ENCODE measurements at regions of chr1 and their contacts with region 1.

Region 1: GRCh38 chr1:153922972-153923925 is at the start of gene GATAD2B:
- DNase-seq: peak; percentile 90
- ATAC-seq: peak; percentile 92
- H3K4me3 Mint-ChIP-seq: peak within 1 kb of the TSS; percentile 95
- H3K27ac Mint-ChIP-seq: peak within 1 kb of the TSS; percentile 95
- H3K4me1 Mint-ChIP-seq: peaks cover 47% of the 10 kb centered on the region
- H3K27me3 Mint-ChIP-seq: no peaks in the 10 kb centered on the region
- CTCF ChIP-seq: no peak
- total RNA-seq, gene GATAD2B: 78.4 and 86.3 TPM in 2 replicates

Region 2: GRCh38 chr1:153670859-153671627 is 252.2 kb before region 1 on chr1 and contains the start of gene ILF2:
- CTCF ChIA-PET with region 1: no interaction called
- POLR2A ChIA-PET with region 1: interaction called, 3 read pairs
- intact Hi-C with region 1: loop called (anchors 5 kb)
- DNase-seq: peak; percentile 85
- ATAC-seq: peak; percentile 83
- H3K4me3 Mint-ChIP-seq: no peak within 1 kb of the TSS
- H3K27ac Mint-ChIP-seq: no peak within 1 kb of the TSS
- H3K4me1 Mint-ChIP-seq: peaks cover 28% of the 10 kb centered on the region
- H3K27me3 Mint-ChIP-seq: no peaks in the 10 kb centered on the region
- CTCF ChIP-seq: no peak
- total RNA-seq, gene ILF2: 182 and 191 TPM in 2 replicates

Region 3: GRCh38 chr1:153816283-153816889 is 106.9 kb before region 1 on chr1:
- CTCF ChIA-PET with region 1: interaction called, 3 read pairs
- POLR2A ChIA-PET with region 1: interaction called, 3 read pairs
- intact Hi-C with region 1: loop called (anchors 1 kb)
- DNase-seq: no peak
- ATAC-seq: no peak
- H3K4me3 Mint-ChIP-seq: no peak overlapping the region
- H3K27ac Mint-ChIP-seq: no peak overlapping the region
- H3K4me1 Mint-ChIP-seq: peaks cover 3% of the 10 kb centered on the region
- H3K27me3 Mint-ChIP-seq: no peaks in the 10 kb centered on the region
- CTCF ChIP-seq: no peak

Region 4: DNA sequence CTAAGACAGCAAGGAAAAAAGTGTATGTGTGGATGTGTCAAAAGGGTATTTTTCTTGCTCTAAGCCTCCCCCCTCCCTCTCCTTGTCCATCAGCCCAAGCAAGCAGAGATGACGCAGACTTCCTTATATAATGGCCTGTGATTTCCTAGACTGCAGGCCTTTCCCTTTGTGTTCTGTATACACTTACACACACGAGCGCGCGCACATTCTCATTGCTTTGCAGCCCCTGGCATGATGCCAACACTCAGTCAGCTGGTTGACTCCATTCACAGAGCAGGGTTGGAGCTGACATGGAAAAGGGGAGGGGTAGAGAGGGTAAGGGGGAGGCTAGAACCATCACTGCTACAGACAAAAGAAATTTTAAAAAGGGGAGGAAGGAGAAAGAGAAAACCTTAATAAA is 42.3 kb before region 1 on chr1:
- CTCF ChIA-PET with region 1: no interaction called
- POLR2A ChIA-PET with region 1: no interaction called
- intact Hi-C with region 1: loop called (anchors 5 kb)
- DNase-seq: no peak
- ATAC-seq: peak; percentile 62
- H3K4me3 Mint-ChIP-seq: no peak overlapping the region
- H3K27ac Mint-ChIP-seq: no peak overlapping the region
- H3K4me1 Mint-ChIP-seq: peaks cover 27% of the 10 kb centered on the region
- H3K27me3 Mint-ChIP-seq: no peaks in the 10 kb centered on the region
- CTCF ChIP-seq: no peak

Region 5: DNA sequence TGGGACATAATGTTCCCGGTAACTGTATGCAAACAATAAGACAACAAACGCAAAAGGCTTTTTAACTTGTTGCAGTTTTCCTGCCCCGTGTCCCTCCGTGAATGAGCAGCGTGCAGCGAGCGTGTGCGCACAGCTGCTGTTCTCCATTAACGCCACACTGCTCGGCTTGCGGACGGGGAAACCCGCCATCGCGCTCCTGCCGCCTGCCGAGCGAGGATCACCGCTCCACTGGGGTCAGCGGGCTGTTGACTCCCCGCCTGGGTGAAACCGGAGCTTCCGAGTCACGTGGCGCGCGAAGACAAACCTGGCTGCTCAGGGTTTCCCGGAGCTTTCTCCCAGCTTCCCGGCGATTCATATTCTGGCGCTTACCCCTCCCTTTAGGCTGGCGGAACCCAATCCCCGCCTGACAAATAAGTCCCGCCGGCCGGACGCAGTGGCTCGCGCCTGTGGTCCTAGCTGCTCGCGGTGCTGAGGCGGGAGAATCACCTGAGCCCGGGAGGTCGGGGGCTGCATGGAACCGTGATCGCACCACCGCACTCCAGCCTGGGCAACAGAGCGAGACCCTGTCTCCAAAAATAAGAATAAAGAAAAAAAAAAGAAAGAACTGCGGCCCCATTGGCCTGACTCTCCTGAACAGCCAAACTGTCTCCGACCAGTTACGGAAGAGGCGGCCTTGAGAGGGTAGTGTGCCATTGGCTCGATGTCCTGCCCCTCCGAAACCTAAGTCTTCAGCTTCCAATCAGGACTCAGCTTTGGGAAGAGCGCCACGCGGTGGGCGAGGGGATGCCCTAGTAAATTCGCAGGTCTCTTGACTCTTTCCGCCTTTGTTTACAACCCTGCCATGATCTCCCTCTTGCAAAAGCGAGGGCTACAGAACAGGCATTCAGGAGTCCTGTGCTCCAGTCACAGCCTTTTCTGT is 44.1 kb after region 1 on chr1 and contains the start of gene CREB3L4:
- CTCF ChIA-PET with region 1: interaction called, 6 read pairs
- POLR2A ChIA-PET with region 1: interaction called, 64 read pairs
- intact Hi-C with region 1: loop called (anchors 1 kb)
- DNase-seq: peak; percentile 72
- ATAC-seq: peak; percentile 85
- H3K4me3 Mint-ChIP-seq: peak within 1 kb of the TSS; percentile 96
- H3K27ac Mint-ChIP-seq: peak within 1 kb of the TSS; percentile 97
- H3K4me1 Mint-ChIP-seq: peaks cover 62% of the 10 kb centered on the region
- H3K27me3 Mint-ChIP-seq: no peaks in the 10 kb centered on the region
- CTCF ChIP-seq: no peak
- total RNA-seq, gene CREB3L4: 9.4 and 10.2 TPM in 2 replicates

Region 6: DNA sequence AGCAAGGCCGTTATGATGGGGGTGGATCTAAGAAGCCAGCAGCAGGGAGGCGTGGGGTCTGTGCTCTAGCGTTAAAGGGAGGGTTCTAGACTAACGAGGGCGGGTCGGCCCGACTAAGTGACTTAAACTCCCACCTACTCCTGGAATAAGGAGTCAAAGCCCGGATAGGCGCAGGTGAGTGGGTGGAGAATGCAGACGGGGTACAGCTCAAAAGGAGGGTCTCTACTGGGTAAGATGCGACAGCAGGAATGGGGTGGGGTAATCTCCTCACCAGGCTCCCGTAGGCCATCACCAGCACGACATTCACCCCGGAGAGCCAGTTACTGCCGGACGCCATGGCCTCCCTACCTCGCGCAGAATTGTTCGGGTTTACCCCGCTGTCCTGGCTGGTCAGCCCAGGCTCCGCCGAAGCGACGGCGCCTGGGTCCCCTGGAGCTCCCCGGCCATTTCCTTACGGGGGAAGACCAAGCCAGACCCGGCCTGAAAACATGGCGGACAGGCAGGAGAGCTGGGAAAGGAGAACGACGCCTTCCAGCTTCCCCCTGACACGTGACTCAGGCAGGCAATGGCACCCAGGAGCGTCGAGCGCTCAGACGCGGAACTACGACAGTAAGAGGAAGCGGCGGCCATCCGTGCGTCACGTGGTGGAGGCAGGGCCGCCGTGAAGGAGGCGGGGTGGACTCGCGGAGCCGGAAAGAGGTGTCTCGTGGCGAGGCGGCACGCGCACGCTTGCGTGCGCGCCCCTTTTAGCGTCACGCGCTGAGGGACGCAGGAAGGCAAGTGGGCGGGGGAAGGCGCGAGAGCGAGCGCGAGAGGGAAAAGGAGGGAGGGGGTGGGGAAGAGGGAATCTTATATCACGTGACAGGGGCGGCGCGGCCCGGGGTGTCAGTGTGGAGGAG is 297.1 kb after region 1 on chr1 and contains the start of gene UBAP2L:
- CTCF ChIA-PET with region 1: no interaction called
- POLR2A ChIA-PET with region 1: interaction called, 3 read pairs
- intact Hi-C with region 1: loop called (anchors 1 kb)
- DNase-seq: peak; percentile 98
- ATAC-seq: peak; percentile 84
- H3K4me3 Mint-ChIP-seq: peak within 1 kb of the TSS; percentile 99
- H3K27ac Mint-ChIP-seq: peak within 1 kb of the TSS; percentile 100
- H3K4me1 Mint-ChIP-seq: peaks cover 75% of the 10 kb centered on the region
- H3K27me3 Mint-ChIP-seq: no peaks in the 10 kb centered on the region
- CTCF ChIP-seq: no peak
- total RNA-seq, gene UBAP2L: 209 and 234 TPM in 2 replicates